ENCODE measurements at regions of chr5 and their contacts with region 1.

Region 1: GRCh38 chr5:56686337-56687195 is 128.8 kb upstream of the MAP3K1 start:
- DNase-seq: peak in 5 of 9 donors; percentile 28 to 56 (median 42)
- ATAC-seq: peak; percentile 60
- H3K4me3 ChIP-seq: no peak overlapping the region
- H3K4me3 Mint-ChIP-seq: peak overlapping the region in 9 of 10 donors; percentile 6 to 66 (median 40)
- H3K27ac ChIP-seq: peak overlapping the region; percentile 30
- H3K27ac Mint-ChIP-seq: peak overlapping the region; percentile 22 to 98 (median 79)
- H3K4me1 ChIP-seq: peaks cover 19 to 75% of the 10 kb centered on the region in 2 donors
- H3K4me1 Mint-ChIP-seq: peaks cover 49 to 88% (median 85%) of the 10 kb centered on the region in 7 donors
- H3K27me3 ChIP-seq: no peaks in the 10 kb centered on the region
- H3K27me3 Mint-ChIP-seq: no peaks in the 10 kb centered on the region

Region 2: DNA sequence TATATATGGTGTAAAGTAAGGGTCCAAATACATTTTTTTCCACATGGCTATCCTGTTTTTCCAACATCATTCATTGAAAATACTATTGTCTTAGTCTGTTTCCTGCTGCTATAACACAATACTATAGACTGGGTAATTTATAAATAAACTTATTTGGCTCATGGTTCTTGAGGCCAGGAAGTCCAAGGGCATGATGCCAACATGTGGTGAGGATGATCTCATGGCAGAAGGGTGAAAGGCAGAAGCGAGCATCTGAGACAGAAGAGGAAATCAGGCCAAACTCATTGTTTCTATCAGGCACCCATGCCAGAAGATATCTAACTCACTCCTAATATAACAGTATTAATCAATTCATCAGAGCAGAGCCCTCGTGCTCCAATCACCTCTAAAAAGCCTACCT is 496.1 kb before region 1 on chr5:
- CTCF ChIA-PET with region 1: no interaction called
- POLR2A ChIA-PET with region 1: no interaction called
- intact Hi-C with region 1: no loop called
- DNase-seq: peak in 7 of 9 donors; percentile 23 to 69 (median 57)
- ATAC-seq: peak; percentile 73
- H3K4me3 ChIP-seq: no peak overlapping the region
- H3K4me3 Mint-ChIP-seq: peak overlapping the region in 4 of 10 donors; percentile 22 to 44 (median 30)
- H3K27ac ChIP-seq: no peak overlapping the region
- H3K27ac Mint-ChIP-seq: peak overlapping the region in 7 of 9 donors; percentile 13 to 80 (median 53)
- H3K4me1 ChIP-seq: peaks cover 0 to 18% of the 10 kb centered on the region in 2 donors
- H3K4me1 Mint-ChIP-seq: peaks cover 0 to 35% (median 31%) of the 10 kb centered on the region in 7 donors
- H3K27me3 ChIP-seq: no peaks in the 10 kb centered on the region
- H3K27me3 Mint-ChIP-seq: no peaks in the 10 kb centered on the region

Region 3: DNA sequence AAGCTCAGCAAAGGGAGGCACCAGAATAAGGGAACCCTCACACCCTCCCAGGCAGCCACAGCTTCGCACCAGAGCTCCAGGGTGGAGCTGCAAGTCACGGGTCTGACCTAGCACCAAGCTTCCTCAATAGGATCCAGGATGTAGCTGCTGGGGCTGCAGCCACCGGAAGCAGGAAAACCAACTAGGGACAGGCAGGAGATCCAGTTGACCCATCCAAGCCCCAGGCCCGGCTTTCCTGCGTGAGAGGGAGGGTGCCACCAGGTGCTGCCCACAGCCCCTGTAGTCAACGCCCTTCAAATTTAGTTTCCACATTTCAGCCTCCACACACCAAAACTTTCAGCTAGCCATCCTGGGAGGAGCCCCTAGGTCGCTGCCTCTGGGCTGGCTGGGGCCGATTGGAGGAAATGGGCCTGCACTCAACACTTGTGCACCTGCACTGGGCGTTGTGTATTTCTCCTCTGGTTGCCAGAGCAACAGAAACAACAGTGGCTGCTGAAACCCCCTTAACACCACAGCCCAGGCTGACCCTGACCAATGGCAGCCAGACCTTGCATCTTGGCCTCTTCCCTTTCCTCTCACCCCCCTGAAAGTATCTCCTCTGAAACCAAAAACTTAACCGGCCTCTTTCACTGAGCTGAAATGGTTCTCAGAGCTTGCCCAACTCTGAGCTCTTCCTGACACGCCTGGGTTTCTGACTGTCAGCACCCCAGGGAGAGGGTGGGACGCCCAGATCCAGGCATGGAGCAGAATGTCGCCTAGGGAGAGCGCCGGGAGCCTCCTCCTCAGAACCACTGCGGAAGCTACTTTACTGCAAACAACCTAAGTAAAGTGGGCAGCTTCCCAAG is 97.7 kb before region 1 on chr5:
- CTCF ChIA-PET with region 1: no interaction called
- POLR2A ChIA-PET with region 1: interaction called, 17 read pairs
- intact Hi-C with region 1: loop called in 1 of 2 experiments (anchors 5 kb)
- DNase-seq: peak; percentile 30 to 75 (median 54)
- ATAC-seq: peak; percentile 90
- H3K4me3 ChIP-seq: no peak overlapping the region
- H3K4me3 Mint-ChIP-seq: peak overlapping the region; percentile 23 to 90 (median 68)
- H3K27ac ChIP-seq: peak overlapping the region; percentile 68
- H3K27ac Mint-ChIP-seq: peak overlapping the region; percentile 85 to 97 (median 93)
- H3K4me1 ChIP-seq: peaks cover 30 to 50% of the 10 kb centered on the region in 2 donors
- H3K4me1 Mint-ChIP-seq: peaks cover 36 to 66% (median 62%) of the 10 kb centered on the region in 7 donors
- H3K27me3 ChIP-seq: no peaks in the 10 kb centered on the region
- H3K27me3 Mint-ChIP-seq: peaks cover 0 to 4% (median 0%) of the 10 kb centered on the region in 5 donors

Region 4: DNA sequence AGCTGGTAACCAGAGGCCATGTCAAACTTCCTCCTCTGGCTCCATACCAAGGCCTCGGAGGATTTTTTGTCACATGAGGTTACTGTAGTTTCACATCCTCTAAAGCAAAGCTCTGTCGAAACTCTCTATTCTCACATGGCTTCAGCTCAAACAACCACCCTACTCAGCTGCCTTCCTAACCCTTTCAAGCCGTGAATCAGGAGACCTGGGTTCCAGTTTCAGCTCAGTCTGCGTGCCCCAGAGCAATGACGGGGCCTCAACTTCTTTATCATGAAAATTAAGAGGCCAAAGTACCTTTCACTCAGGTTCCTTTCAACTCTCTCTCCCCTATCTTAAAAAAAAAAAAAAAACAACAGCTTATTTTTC is 16.5 kb before region 1 on chr5:
- CTCF ChIA-PET with region 1: interaction called, 6 read pairs
- POLR2A ChIA-PET with region 1: interaction called, 22 read pairs
- intact Hi-C with region 1: loop called in 1 of 2 experiments (anchors 2 kb)
- DNase-seq: peak in 7 of 9 donors; percentile 9 to 68 (median 40)
- ATAC-seq: peak; percentile 89
- H3K4me3 ChIP-seq: peak overlapping the region; percentile 13
- H3K4me3 Mint-ChIP-seq: peak overlapping the region; percentile 55 to 83 (median 70)
- H3K27ac ChIP-seq: peak overlapping the region; percentile 65
- H3K27ac Mint-ChIP-seq: peak overlapping the region; percentile 80 to 95 (median 90)
- H3K4me1 ChIP-seq: peaks cover 0 to 40% of the 10 kb centered on the region in 2 donors
- H3K4me1 Mint-ChIP-seq: peaks cover 35 to 53% (median 45%) of the 10 kb centered on the region in 7 donors
- H3K27me3 ChIP-seq: no peaks in the 10 kb centered on the region
- H3K27me3 Mint-ChIP-seq: peaks cover 0 to 10% (median 0%) of the 10 kb centered on the region in 5 donors

Region 5: DNA sequence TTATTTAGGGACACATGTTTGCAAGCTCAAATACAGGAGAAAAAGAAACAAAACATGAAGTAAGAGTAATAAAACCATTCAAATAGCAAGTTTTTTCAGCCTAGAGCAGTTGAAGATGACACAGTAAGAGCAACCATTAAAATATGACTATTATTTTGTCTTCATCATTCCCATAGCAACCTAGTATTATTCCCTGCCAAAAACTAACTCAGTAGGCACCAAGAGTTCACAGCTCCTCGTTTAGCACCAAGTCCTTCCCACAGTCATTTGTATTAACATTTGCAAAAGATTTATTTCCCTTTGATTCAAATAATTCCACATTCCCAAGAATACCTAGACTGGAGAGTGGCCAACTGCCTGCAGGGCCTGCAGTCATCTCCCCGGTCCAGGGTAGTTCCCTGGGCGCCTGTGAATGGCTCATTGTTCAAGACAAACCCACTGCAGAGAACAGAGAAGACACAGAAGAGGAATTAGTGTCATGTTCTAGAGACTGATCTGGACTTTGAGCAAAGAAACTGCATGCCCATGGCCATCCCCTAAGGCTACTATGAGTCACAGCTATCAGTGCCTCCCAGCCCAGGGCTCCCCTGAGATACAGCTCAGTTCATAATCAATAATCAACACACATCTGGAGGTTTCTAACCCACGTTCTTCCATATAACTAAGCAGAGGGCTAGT is 10.3 kb before region 1 on chr5:
- CTCF ChIA-PET with region 1: no interaction called
- POLR2A ChIA-PET with region 1: interaction called, 7 read pairs
- intact Hi-C with region 1: loop called in 1 of 2 experiments (anchors 1 kb)
- DNase-seq: no peak
- ATAC-seq: no peak
- H3K4me3 ChIP-seq: no peak overlapping the region
- H3K4me3 Mint-ChIP-seq: no peak overlapping the region
- H3K27ac ChIP-seq: no peak overlapping the region
- H3K27ac Mint-ChIP-seq: no peak overlapping the region
- H3K4me1 ChIP-seq: peaks cover 0 to 24% of the 10 kb centered on the region in 2 donors
- H3K4me1 Mint-ChIP-seq: peaks cover 25 to 51% (median 38%) of the 10 kb centered on the region in 7 donors
- H3K27me3 ChIP-seq: no peaks in the 10 kb centered on the region
- H3K27me3 Mint-ChIP-seq: peaks cover 0 to 2% (median 0%) of the 10 kb centered on the region in 5 donors

Region 6: GRCh38 chr5:56698463-56699381 is 12.2 kb after region 1 on chr5:
- CTCF ChIA-PET with region 1: interaction called, 8 read pairs
- POLR2A ChIA-PET with region 1: interaction called, 61 read pairs
- intact Hi-C with region 1: loop called in 1 of 2 experiments (anchors 1 kb)
- DNase-seq: no peak
- ATAC-seq: no peak
- H3K4me3 ChIP-seq: no peak overlapping the region
- H3K4me3 Mint-ChIP-seq: peak overlapping the region in 8 of 10 donors; percentile 33 to 70 (median 54)
- H3K27ac ChIP-seq: peak overlapping the region; percentile 25
- H3K27ac Mint-ChIP-seq: peak overlapping the region; percentile 4 to 87 (median 69)
- H3K4me1 ChIP-seq: peaks cover 12 to 60% of the 10 kb centered on the region in 2 donors
- H3K4me1 Mint-ChIP-seq: peaks cover 47 to 99% (median 80%) of the 10 kb centered on the region in 7 donors
- H3K27me3 ChIP-seq: no peaks in the 10 kb centered on the region
- H3K27me3 Mint-ChIP-seq: peaks cover 0 to 6% (median 0%) of the 10 kb centered on the region in 5 donors

Region 7: GRCh38 chr5:56737002-56737621 is 50.5 kb after region 1 on chr5:
- CTCF ChIA-PET with region 1: no interaction called
- POLR2A ChIA-PET with region 1: interaction called, 14 read pairs
- intact Hi-C with region 1: no loop called
- DNase-seq: peak in 1 of 9 donors; percentile 6
- ATAC-seq: peak; percentile 57
- H3K4me3 ChIP-seq: peak overlapping the region; percentile 28
- H3K4me3 Mint-ChIP-seq: peak overlapping the region; percentile 50 to 88 (median 67)
- H3K27ac ChIP-seq: peak overlapping the region; percentile 68
- H3K27ac Mint-ChIP-seq: peak overlapping the region; percentile 74 to 94 (median 89)
- H3K4me1 ChIP-seq: peaks cover 14 to 29% of the 10 kb centered on the region in 2 donors
- H3K4me1 Mint-ChIP-seq: peaks cover 40 to 64% (median 51%) of the 10 kb centered on the region in 7 donors
- H3K27me3 ChIP-seq: no peaks in the 10 kb centered on the region
- H3K27me3 Mint-ChIP-seq: peaks cover 0 to 2% (median 0%) of the 10 kb centered on the region in 5 donors

Measured in naive thymus-derived CD4-positive, alpha-beta T cell (primary cell).